Activated CD4-positive, alpha-beta T cell treated with anti-CD3 and anti-CD28 coated beads, Interleukin-2, amount 10 ng/mL, durations not matched to agents 24 days and 14 days (primary cell): ENCODE measurements at regions of chr12 and their contacts with region 1.

Region 1: GRCh38 chr12:6533923-6534694 is at the start of gene GAPDH:
- DNase-seq: peak; percentile 97
- H3K4me3 Mint-ChIP-seq: peak within 1 kb of the TSS; percentile 92
- H3K27ac Mint-ChIP-seq: peak within 1 kb of the TSS; percentile 99
- H3K4me1 Mint-ChIP-seq: peaks cover 41% of the 10 kb centered on the region
- H3K27me3 Mint-ChIP-seq: no peaks in the 10 kb centered on the region
- total RNA-seq, gene GAPDH: 4,585 and 4,599 TPM in 2 replicates

Region 2: GRCh38 chr12:6470375-6471163 is 63.5 kb before region 1 on chr12 and contains the start of gene VAMP1:
- intact Hi-C with region 1: loop called (anchors 1 kb)
- DNase-seq: peak; percentile 99
- H3K4me3 Mint-ChIP-seq: peak within 1 kb of the TSS; percentile 94
- H3K27ac Mint-ChIP-seq: peak within 1 kb of the TSS; percentile 91
- H3K4me1 Mint-ChIP-seq: peaks cover 52% of the 10 kb centered on the region
- H3K27me3 Mint-ChIP-seq: peaks cover 1% of the 10 kb centered on the region
- total RNA-seq, gene VAMP1: 50.0 and 51.2 TPM in 2 replicates

Region 3: GRCh38 chr12:6554168-6555017 is 20.3 kb after region 1 on chr12:
- intact Hi-C with region 1: loop called (anchors 2 kb)
- DNase-seq: peak; percentile 86
- H3K4me3 Mint-ChIP-seq: peak overlapping the region; percentile 92
- H3K27ac Mint-ChIP-seq: peak overlapping the region; percentile 81
- H3K4me1 Mint-ChIP-seq: peaks cover 39% of the 10 kb centered on the region
- H3K27me3 Mint-ChIP-seq: no peaks in the 10 kb centered on the region

Region 4: GRCh38 chr12:6607751-6608591 is 73.9 kb after region 1 on chr12:
- intact Hi-C with region 1: loop called (anchors 2 kb)
- DNase-seq: peak; percentile 89
- H3K4me3 Mint-ChIP-seq: no peak overlapping the region
- H3K27ac Mint-ChIP-seq: no peak overlapping the region
- H3K4me1 Mint-ChIP-seq: peaks cover 45% of the 10 kb centered on the region
- H3K27me3 Mint-ChIP-seq: no peaks in the 10 kb centered on the region